Activated B cell treated with CpG ODN at 0.5 μM for 24 hours (primary cell): ENCODE measurements at regions of chr22 and their contacts with region 1.

Region 1: DNA sequence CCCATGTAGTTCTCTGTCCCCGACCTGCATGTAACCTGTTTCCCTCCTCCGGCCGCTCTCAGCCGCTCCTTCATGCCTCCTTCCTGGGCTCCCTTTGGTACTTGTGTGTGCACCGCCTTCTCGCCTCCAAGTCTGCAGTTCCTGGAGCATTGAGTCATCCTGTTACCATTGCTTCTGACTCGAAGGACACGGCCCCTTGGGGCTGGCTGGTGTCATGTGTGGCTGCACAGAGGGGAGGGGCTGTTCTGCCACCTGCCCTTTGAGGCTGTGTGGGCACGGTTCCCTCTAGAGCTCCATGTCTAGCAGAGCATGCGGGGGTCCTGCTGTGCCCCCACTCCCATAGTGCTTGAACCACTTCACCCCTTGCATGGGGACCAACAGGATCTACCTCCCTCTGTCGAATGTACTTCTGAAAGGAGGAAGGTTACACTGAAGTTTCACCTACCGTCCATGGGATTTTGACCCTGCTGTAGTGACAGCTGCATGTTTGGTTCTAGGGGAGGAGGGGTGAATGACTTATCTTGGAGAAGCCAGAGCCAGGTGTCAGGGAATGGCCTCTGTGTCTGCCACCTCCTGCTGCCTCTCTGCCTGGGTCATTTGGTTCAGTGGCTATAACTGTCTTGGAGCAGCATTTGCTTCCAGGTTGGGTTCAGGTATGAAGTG is 39.6 kb downstream of the BCR start:
- DNase-seq: peak; percentile 66
- ATAC-seq: peak; percentile 88
- H3K4me3 Mint-ChIP-seq: peak overlapping the region; percentile 74
- H3K27ac Mint-ChIP-seq: peak overlapping the region; percentile 61
- H3K4me1 Mint-ChIP-seq: peaks cover 72% of the 10 kb centered on the region
- H3K27me3 Mint-ChIP-seq: no peaks in the 10 kb centered on the region
- CTCF ChIP-seq: no peak

Region 2: DNA sequence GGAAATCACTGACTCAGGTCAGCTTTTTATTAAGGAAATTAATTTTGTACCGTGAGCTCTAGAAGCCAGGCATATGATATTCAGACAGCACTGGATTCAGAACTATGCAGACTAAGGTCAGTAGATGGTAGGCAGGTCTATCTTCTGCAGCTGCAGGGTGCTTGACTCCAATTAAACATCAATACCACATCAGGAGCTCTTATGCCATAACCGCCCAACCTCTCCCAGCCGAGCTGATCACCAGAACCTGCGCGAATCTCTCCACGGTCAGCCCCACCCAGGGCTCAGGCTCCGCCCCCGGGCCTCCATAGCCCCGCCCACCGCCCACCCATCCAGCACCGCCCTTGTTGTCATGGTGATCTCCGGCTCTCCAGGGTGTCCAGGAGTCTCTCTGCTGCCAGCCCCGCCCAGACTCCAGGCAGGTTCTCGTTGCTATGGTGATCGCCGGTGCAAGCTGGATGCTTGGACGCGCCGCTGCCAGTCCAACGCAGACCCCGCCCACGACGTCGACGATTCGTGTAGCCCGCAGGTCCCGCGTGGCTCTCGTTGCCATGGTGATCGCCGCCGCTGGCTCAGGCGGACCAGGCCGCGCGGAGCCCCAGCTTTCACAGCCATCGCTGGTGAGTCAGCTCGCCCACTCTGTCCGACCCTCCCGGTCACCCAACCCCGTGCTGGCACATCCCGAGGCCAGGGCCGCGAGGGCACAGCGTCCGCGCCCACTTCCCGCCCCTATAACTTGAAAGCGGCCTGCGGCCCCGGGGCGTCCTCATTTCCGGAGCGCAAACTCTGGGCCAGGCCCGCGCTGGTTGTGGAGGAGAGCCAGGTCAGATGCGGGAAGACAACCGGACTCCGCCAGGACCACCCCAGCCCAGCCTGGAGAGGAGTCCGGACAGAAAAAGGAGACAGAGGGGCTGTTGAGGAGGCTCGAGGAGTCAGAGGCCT is 74.8 kb before region 1 on chr22 and contains the start of gene RAB36:
- CTCF ChIA-PET with region 1: no interaction called
- POLR2A ChIA-PET with region 1: interaction called, 4 read pairs
- intact Hi-C with region 1: loop called (anchors 2 kb)
- DNase-seq: peak; percentile 91
- ATAC-seq: peak; percentile 65
- H3K4me3 Mint-ChIP-seq: peak within 1 kb of the TSS; percentile 81
- H3K27ac Mint-ChIP-seq: peak within 1 kb of the TSS; percentile 86
- H3K4me1 Mint-ChIP-seq: peaks cover 56% of the 10 kb centered on the region
- H3K27me3 Mint-ChIP-seq: no peaks in the 10 kb centered on the region
- CTCF ChIP-seq: no peak
- total RNA-seq, gene RAB36: 1.7 and 2.1 TPM in 2 replicates

Region 3: DNA sequence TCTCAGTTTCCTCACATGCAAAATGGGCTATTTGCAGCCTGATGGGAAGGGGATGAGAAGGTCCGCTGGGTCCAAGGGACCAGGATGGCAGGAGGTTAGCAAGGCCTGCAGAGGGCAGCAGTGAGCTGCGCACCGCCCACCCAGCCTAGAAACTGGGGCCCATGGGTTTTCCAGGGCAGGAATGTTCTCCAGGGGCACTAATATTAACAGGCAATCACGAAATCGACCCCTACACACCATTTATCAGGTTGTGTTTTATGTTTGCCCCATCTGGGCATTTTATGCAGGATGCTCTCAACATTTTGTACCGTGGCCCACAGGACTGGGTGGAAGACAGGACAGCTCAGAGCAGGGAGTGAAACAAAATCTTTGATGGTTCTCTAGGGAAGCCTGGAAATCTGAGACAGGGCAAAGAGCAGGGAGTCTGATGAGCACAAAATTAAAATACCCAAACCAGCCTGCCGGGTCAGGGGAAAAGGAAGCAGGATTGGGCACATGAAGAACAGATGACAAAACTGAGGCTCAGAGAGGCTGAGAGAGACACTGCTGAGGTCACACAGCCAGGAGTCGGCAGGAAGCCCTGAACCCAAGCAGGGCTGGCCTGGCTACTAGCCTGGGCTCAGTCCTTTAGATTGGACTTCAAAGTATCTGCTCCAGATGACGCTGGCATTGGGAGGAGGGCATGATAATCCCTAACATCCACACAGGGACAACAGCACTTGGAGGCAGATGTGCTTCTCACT is 41.3 kb before region 1 on chr22:
- CTCF ChIA-PET with region 1: interaction called, 7 read pairs
- POLR2A ChIA-PET with region 1: interaction called, 9 read pairs
- intact Hi-C with region 1: loop called (anchors 1 kb)
- DNase-seq: peak; percentile 56
- ATAC-seq: peak; percentile 28
- H3K4me3 Mint-ChIP-seq: peak overlapping the region; percentile 46
- H3K27ac Mint-ChIP-seq: peak overlapping the region; percentile 19
- H3K4me1 Mint-ChIP-seq: peaks cover 51% of the 10 kb centered on the region
- H3K27me3 Mint-ChIP-seq: peaks cover 3% of the 10 kb centered on the region
- CTCF ChIP-seq: peak; percentile 87

Region 4: DNA sequence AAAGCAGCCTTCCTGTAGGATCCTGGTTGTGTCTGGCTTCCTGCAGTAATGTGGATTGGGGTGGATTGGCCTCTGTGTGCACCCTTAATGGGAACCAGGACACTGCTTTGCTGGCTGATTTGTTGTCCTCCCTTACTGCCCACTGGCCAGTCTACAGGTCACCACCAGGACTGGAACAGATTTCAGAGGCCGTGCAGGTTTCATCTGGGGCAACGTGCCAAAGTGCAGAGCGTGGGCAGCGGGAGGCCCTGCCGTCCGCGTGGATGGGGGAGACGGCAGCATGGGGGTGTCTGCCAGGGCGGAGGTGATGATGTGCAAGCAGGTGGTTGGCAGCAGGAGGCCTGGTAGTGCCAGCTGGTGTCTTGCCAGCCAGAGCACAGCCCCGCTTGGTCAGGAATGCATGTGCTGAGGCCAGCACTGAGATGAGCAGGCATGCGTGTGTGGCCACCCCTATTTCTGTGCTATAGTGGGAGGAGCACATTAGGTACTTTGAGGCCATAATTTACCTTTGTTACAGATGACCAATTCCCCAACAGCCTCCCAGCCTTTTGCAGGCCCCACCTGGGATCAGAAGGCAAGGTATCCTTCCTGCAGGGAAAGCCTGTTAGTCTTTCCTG is 15.3 kb before region 1 on chr22:
- CTCF ChIA-PET with region 1: interaction called, 4 read pairs
- POLR2A ChIA-PET with region 1: interaction called, 17 read pairs
- intact Hi-C with region 1: loop called (anchors 1 kb)
- DNase-seq: no peak
- ATAC-seq: no peak
- H3K4me3 Mint-ChIP-seq: no peak overlapping the region
- H3K27ac Mint-ChIP-seq: no peak overlapping the region
- H3K4me1 Mint-ChIP-seq: peaks cover 39% of the 10 kb centered on the region
- H3K27me3 Mint-ChIP-seq: no peaks in the 10 kb centered on the region
- CTCF ChIP-seq: no peak

Region 5: DNA sequence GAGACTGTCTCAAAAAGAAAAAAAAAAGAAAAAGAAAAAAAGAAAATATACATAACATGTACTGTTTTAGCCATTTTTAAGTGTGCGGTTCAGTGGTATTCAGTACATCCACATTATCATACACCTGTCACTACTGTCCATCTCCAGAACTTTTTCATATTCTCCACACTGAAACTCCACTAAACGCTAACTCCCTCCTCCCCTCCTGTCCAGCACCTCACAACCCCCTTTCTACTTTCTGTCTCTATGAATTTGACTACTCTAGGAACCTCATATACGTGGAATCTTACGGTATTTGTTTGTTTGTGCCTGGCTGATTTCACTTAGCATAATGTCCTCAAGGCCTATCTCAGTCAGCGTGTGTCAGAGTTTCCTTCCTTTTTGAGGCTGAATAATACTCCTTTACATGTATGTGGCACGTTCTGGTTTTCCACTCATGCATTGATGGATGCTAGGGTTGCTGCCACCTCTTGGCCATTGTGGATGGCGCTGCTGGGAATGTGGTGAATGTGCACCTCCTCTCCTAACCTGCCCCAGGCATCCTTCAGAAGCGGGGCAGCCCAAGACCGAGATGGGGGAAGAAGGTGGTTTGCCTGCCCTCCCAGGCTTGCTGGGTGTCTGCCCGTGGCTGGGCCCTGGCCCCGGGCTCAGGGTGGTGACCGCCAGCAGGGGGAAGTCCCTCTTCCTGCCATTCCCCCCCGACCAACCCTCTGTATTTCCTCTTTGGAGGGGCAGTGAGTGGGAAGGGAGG is 20.9 kb after region 1 on chr22:
- CTCF ChIA-PET with region 1: no interaction called
- POLR2A ChIA-PET with region 1: no interaction called
- intact Hi-C with region 1: loop called (anchors 1 kb)
- DNase-seq: no peak
- ATAC-seq: peak; percentile 32
- H3K4me3 Mint-ChIP-seq: no peak overlapping the region
- H3K27ac Mint-ChIP-seq: peak overlapping the region; percentile 5
- H3K4me1 Mint-ChIP-seq: peaks cover 42% of the 10 kb centered on the region
- H3K27me3 Mint-ChIP-seq: no peaks in the 10 kb centered on the region
- CTCF ChIP-seq: no peak

Region 6: DNA sequence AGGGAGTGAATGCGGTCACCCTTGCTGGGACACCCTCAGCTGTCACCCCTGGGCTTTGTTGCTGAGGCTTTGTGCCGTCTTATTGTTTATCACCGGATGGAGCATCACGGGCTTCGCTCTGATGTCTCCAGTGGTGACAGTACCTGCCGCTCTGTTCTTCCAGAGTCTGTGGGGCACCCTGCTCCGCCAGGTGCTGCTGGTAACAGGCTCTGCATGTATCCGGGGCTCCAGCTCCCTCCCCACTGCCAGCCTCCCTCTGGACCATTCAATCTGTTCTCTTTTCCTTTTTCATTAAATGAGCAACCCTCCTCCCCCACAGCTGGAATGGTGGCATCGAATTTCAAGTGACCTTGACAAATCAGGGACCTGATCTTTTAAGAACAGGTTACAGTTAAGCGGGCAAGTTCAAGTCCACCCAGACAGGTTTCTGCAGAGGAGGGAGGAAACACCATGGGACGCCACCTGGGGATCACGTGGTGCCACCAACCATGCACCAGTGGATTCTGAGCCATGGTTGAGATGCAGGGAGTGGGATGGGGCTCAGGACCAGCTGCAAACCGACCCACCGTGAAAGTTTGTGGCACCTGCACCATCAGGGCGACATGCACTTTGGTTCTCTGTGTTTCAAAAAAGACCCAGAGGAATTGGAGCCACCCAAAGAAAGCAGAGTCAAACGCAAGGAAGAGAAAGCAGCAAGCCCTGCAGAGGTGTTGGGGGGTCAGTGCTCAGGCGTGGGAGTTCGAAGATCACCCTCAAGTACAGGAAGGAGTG is 49.7 kb after region 1 on chr22:
- CTCF ChIA-PET with region 1: no interaction called
- POLR2A ChIA-PET with region 1: interaction called, 6 read pairs
- intact Hi-C with region 1: loop called (anchors 2 kb)
- DNase-seq: peak; percentile 37
- ATAC-seq: peak; percentile 84
- H3K4me3 Mint-ChIP-seq: peak overlapping the region; percentile 56
- H3K27ac Mint-ChIP-seq: peak overlapping the region; percentile 77
- H3K4me1 Mint-ChIP-seq: peaks cover 33% of the 10 kb centered on the region
- H3K27me3 Mint-ChIP-seq: peaks cover 2% of the 10 kb centered on the region
- CTCF ChIP-seq: no peak

Region 7: GRCh38 chr22:23281406-23282088 is 61.6 kb after region 1 on chr22:
- CTCF ChIA-PET with region 1: interaction called, 7 read pairs
- POLR2A ChIA-PET with region 1: no interaction called
- intact Hi-C with region 1: loop called (anchors 2 kb)
- DNase-seq: peak; percentile 78
- ATAC-seq: peak; percentile 85
- H3K4me3 Mint-ChIP-seq: no peak overlapping the region
- H3K27ac Mint-ChIP-seq: no peak overlapping the region
- H3K4me1 Mint-ChIP-seq: peaks cover 16% of the 10 kb centered on the region
- H3K27me3 Mint-ChIP-seq: no peaks in the 10 kb centered on the region
- CTCF ChIP-seq: no peak

Region 8: DNA sequence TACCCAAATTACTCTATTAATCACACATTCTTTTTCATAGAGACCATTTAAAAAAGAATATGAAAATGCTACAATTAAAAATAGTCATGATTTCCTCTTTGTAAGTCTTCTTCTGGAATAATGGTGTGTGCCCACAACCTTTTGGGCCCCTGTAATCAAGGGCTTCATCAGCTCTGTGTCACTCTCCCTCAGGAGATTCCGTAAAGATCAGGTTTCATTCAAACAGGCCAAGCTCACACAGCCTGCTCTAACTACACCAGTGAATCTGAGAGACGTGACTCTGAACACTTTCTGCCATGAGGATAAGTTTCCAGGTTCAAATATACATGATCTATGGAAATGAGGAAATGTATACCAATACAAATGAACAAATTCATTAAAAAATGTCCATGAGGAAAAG is 402.7 kb after region 1 on chr22:
- CTCF ChIA-PET with region 1: no interaction called
- POLR2A ChIA-PET with region 1: no interaction called
- intact Hi-C with region 1: no loop called
- DNase-seq: no peak
- ATAC-seq: no peak
- H3K4me3 Mint-ChIP-seq: no peak overlapping the region
- H3K27ac Mint-ChIP-seq: no peak overlapping the region
- H3K4me1 Mint-ChIP-seq: peaks cover 3% of the 10 kb centered on the region
- H3K27me3 Mint-ChIP-seq: no peaks in the 10 kb centered on the region
- CTCF ChIP-seq: no peak

Region 9: GRCh38 chr22:23685205-23685784 is 465.3 kb after region 1 on chr22:
- CTCF ChIA-PET with region 1: no interaction called
- POLR2A ChIA-PET with region 1: no interaction called
- intact Hi-C with region 1: no loop called
- DNase-seq: no peak
- ATAC-seq: no peak
- H3K4me3 Mint-ChIP-seq: no peak overlapping the region
- H3K27ac Mint-ChIP-seq: no peak overlapping the region
- H3K4me1 Mint-ChIP-seq: no peaks in the 10 kb centered on the region
- H3K27me3 Mint-ChIP-seq: no peaks in the 10 kb centered on the region
- CTCF ChIP-seq: no peak